Uterus (tissue), 4 donors: ENCODE measurements at regions of chr22 and their contacts with region 1.

Region 1: GRCh38 chr22:36781656-36782627 is 6.0 kb upstream of the IFT27 start:
- DNase-seq: peak; percentile 77 to 82
- H3K4me3 ChIP-seq: no peak overlapping the region
- H3K27ac ChIP-seq: no peak overlapping the region
- H3K4me1 ChIP-seq: no peaks in the 10 kb centered on the region
- H3K27me3 ChIP-seq: no peaks in the 10 kb centered on the region
- CTCF ChIP-seq: peak; percentile 81 to 94 (median 89)
- POLR2A ChIP-seq: peak in 1 of 2 donors; percentile 17

Region 2: GRCh38 chr22:36977947-36978660 is 196.2 kb after region 1 on chr22:
- intact Hi-C with region 1: loop called (anchors 10 kb)
- DNase-seq: peak; percentile 90 to 91
- H3K4me3 ChIP-seq: peak overlapping the region; percentile 25 to 34
- H3K27ac ChIP-seq: peak overlapping the region in 1 of 2 donors; percentile 48
- H3K4me1 ChIP-seq: no peaks in the 10 kb centered on the region
- H3K27me3 ChIP-seq: no peaks in the 10 kb centered on the region
- CTCF ChIP-seq: peak; percentile 89 to 98 (median 95)
- POLR2A ChIP-seq: no peak